ENCODE measurements at regions of chr5 and their contacts with region 1.

Region 1: GRCh38 chr5:169710675-169711074 is 73.6 kb downstream of the DOCK2 start:
- DNase-seq: no peak
- H3K4me3 ChIP-seq: no peak overlapping the region
- H3K27ac ChIP-seq: no peak overlapping the region
- H3K4me1 ChIP-seq: peaks cover 33% of the 10 kb centered on the region
- H3K27me3 ChIP-seq: no peaks in the 10 kb centered on the region

Region 2: GRCh38 chr5:169980418-169981053 is 269.9 kb after region 1 on chr5 and contains the start of gene INSYN2B:
- in situ Hi-C with region 1: loop called (anchors 5 kb)
- DNase-seq: peak; percentile 92
- H3K4me3 ChIP-seq: peak within 1 kb of the TSS; percentile 90
- H3K27ac ChIP-seq: peak within 1 kb of the TSS; percentile 87
- H3K4me1 ChIP-seq: peaks cover 33% of the 10 kb centered on the region
- H3K27me3 ChIP-seq: no peaks in the 10 kb centered on the region
- total RNA-seq, gene INSYN2B: 43.2 and 50.7 TPM in 2 replicates

Region 3: GRCh38 chr5:170216266-170216864 is 505.7 kb after region 1 on chr5:
- in situ Hi-C with region 1: no loop called
- DNase-seq: peak; percentile 70
- H3K4me3 ChIP-seq: no peak overlapping the region
- H3K27ac ChIP-seq: no peak overlapping the region
- H3K4me1 ChIP-seq: peaks cover 18% of the 10 kb centered on the region
- H3K27me3 ChIP-seq: peaks cover 9% of the 10 kb centered on the region; the same call in 1 of the 2 replicates

Measured in GM23248 (cell line).